ENCODE measurements at regions of chr3 and their contacts with region 1.

Region 1: GRCh38 chr3:56783644-56784447 is 17.9 kb downstream of the ARHGEF3 start:
- DNase-seq: peak; percentile 90
- ATAC-seq: peak; percentile 84
- H3K4me3 Mint-ChIP-seq: peak overlapping the region; percentile 74
- H3K27ac Mint-ChIP-seq: peak overlapping the region; percentile 91
- H3K4me1 Mint-ChIP-seq: peaks cover 98% of the 10 kb centered on the region
- H3K27me3 Mint-ChIP-seq: no peaks in the 10 kb centered on the region

Region 2: GRCh38 chr3:56366641-56367162 is 417.1 kb before region 1 on chr3:
- CTCF ChIA-PET with region 1: no interaction called
- POLR2A ChIA-PET with region 1: no interaction called
- DNase-seq: no peak
- ATAC-seq: no peak
- H3K4me3 Mint-ChIP-seq: no peak overlapping the region
- H3K27ac Mint-ChIP-seq: no peak overlapping the region
- H3K4me1 Mint-ChIP-seq: no peaks in the 10 kb centered on the region
- H3K27me3 Mint-ChIP-seq: peaks cover 16% of the 10 kb centered on the region

Region 3: DNA sequence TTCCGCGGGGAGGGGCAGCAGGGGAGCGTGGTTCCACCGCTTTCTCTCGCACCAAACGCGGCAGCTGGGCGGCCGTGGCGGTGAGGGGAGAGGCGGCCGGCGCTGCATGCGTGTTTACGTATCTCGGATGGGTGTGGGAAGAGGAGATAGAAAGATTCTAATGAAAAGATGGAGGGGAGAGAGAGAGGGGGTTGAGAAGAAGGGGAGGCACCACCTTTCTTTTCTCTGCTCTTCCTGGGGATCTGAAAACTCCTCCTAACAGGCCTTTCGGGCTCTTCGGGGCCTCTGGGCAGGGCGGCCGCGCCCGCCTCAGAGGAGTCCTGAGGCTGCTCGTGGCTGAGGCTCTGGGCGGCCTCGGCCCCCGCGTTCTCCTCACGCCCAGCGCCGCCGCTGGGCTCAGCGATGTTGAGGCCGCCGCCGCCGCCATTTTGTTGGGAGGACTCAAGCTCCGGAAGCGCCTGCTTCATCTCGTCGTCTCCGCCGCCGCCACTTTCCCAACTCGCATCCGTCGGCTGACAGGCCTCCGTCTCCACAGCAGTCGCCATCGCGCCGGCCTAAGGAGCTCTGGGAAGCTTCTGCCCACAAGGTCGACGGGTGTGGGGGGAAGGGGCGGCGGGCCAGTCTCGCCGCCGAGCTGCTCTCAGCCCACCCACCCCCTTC is 101.3 kb before region 1 on chr3:
- CTCF ChIA-PET with region 1: no interaction called
- POLR2A ChIA-PET with region 1: interaction called, 16 read pairs
- DNase-seq: peak; percentile 87
- ATAC-seq: peak; percentile 81
- H3K4me3 Mint-ChIP-seq: peak overlapping the region; percentile 96
- H3K27ac Mint-ChIP-seq: peak overlapping the region; percentile 97
- H3K4me1 Mint-ChIP-seq: peaks cover 34% of the 10 kb centered on the region
- H3K27me3 Mint-ChIP-seq: no peaks in the 10 kb centered on the region

Region 4: GRCh38 chr3:56702490-56703315 is 81.1 kb before region 1 on chr3:
- CTCF ChIA-PET with region 1: interaction called, 22 read pairs
- POLR2A ChIA-PET with region 1: interaction called, 3 read pairs
- DNase-seq: peak; percentile 74
- ATAC-seq: peak; percentile 73
- H3K4me3 Mint-ChIP-seq: no peak overlapping the region
- H3K27ac Mint-ChIP-seq: no peak overlapping the region
- H3K4me1 Mint-ChIP-seq: peaks cover 34% of the 10 kb centered on the region
- H3K27me3 Mint-ChIP-seq: no peaks in the 10 kb centered on the region

Region 5: DNA sequence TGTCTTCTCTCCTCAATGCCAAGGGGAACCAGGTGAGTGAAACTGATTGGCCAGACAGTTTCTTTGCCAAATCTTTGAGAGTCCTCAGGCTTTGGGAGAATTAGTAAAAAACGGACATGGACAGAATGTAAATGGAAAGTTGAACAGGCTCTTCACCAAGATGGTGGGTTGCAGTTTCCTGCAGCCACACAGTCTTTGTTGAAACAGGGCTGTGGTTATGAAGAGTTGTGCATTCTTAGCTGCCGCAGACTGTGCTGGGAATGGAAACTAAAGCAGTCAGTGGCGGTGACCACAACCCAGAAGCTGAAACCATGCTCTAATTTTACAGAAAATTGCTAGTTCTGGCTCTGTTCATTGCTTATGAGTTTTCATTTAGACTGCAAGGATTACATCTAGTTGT is 58.7 kb before region 1 on chr3:
- CTCF ChIA-PET with region 1: interaction called, 13 read pairs
- POLR2A ChIA-PET with region 1: interaction called, 6 read pairs
- DNase-seq: peak; percentile 89
- ATAC-seq: peak; percentile 93
- H3K4me3 Mint-ChIP-seq: peak overlapping the region; percentile 71
- H3K27ac Mint-ChIP-seq: peak overlapping the region; percentile 96
- H3K4me1 Mint-ChIP-seq: peaks cover 69% of the 10 kb centered on the region
- H3K27me3 Mint-ChIP-seq: no peaks in the 10 kb centered on the region

Region 6: GRCh38 chr3:56753206-56753820 is 30.5 kb before region 1 on chr3:
- CTCF ChIA-PET with region 1: interaction called, 15 read pairs
- POLR2A ChIA-PET with region 1: interaction called, 45 read pairs
- DNase-seq: peak; percentile 62
- ATAC-seq: peak; percentile 71
- H3K4me3 Mint-ChIP-seq: peak overlapping the region; percentile 48
- H3K27ac Mint-ChIP-seq: peak overlapping the region; percentile 79
- H3K4me1 Mint-ChIP-seq: peaks cover 73% of the 10 kb centered on the region
- H3K27me3 Mint-ChIP-seq: no peaks in the 10 kb centered on the region

Region 7: DNA sequence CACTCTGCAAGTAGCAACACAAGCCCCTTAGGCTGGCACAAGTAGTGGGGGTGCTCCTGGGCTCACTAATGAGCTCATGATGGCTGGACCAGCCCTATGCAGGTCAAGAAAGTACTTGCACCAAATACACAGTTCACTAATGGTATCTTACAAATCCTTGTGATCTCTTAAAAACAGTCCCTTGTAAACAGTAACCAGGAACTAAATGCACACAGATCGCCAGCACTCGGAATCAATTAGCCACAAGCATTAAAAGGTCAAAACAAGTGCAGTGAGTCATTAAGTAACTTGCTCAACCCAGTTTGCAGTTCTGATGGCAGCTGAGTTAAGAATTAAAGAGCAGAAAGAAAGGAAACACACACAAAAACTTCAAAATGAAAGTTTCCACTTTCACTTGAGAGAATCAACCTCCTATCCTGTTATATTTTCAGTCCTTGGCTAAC is 25.3 kb before region 1 on chr3:
- CTCF ChIA-PET with region 1: interaction called, 15 read pairs
- POLR2A ChIA-PET with region 1: interaction called, 45 read pairs
- DNase-seq: peak; percentile 58
- ATAC-seq: peak; percentile 68
- H3K4me3 Mint-ChIP-seq: peak overlapping the region; percentile 29
- H3K27ac Mint-ChIP-seq: peak overlapping the region; percentile 86
- H3K4me1 Mint-ChIP-seq: peaks cover 85% of the 10 kb centered on the region
- H3K27me3 Mint-ChIP-seq: no peaks in the 10 kb centered on the region

Region 8: DNA sequence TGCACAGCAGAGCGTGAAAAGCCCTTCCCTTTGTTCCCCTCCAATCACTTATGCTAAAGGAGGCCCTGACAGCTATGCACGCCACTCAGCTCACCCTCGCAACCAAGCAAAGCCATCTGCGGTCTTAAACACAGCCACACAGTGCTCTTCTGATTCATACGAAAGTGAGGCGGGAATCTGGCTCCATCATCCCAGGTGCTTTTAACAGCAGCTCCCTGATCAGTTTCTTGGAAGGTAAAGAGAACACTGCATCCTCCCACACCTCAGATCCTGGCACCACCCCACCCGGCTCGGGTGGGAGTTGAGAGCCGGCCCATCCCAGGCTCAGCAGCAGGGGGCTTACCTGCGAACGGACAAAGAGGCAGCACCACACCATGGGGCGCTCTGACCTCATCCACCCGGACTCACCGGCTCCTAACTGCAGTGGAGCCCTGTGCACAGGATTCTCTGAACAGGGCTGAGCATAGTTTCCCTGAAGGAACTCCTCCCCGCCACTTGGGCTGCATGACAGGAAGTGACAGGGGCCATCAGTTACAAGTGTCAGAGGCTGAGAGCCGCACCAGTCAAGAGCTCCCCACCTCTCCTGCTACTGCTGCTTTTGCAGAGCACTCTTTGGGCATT is 132.2 kb after region 1 on chr3:
- CTCF ChIA-PET with region 1: interaction called, 3 read pairs
- POLR2A ChIA-PET with region 1: interaction called, 20 read pairs
- DNase-seq: peak; percentile 90
- ATAC-seq: peak; percentile 93
- H3K4me3 Mint-ChIP-seq: peak overlapping the region; percentile 92
- H3K27ac Mint-ChIP-seq: peak overlapping the region; percentile 99
- H3K4me1 Mint-ChIP-seq: peaks cover 63% of the 10 kb centered on the region
- H3K27me3 Mint-ChIP-seq: no peaks in the 10 kb centered on the region

Region 9: DNA sequence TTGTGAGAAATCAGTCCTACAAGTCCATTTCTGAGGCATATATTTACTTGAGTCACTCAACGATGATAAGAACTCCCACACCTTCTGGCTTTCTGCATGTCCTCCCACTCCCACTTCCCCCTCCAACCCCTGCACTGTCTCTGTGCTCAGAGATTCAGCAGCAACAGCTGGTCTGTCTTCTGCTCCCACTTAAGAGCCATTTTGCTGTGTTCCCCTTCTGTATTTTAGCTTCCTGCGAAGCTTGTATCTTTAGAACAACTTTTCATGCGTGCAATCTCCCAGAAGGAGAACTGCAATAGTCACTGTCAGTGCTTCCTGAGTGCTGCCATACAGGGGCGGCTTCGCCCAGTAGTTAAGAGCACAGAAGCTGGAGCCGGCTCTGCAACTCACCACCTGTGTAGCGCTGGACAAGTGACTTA is 186.6 kb after region 1 on chr3:
- CTCF ChIA-PET with region 1: no interaction called
- POLR2A ChIA-PET with region 1: no interaction called
- DNase-seq: no peak
- ATAC-seq: no peak
- H3K4me3 Mint-ChIP-seq: no peak overlapping the region
- H3K27ac Mint-ChIP-seq: no peak overlapping the region
- H3K4me1 Mint-ChIP-seq: no peaks in the 10 kb centered on the region
- H3K27me3 Mint-ChIP-seq: no peaks in the 10 kb centered on the region